ENCODE measurements at regions of chr7 and their contacts with region 1.

Region 1: DNA sequence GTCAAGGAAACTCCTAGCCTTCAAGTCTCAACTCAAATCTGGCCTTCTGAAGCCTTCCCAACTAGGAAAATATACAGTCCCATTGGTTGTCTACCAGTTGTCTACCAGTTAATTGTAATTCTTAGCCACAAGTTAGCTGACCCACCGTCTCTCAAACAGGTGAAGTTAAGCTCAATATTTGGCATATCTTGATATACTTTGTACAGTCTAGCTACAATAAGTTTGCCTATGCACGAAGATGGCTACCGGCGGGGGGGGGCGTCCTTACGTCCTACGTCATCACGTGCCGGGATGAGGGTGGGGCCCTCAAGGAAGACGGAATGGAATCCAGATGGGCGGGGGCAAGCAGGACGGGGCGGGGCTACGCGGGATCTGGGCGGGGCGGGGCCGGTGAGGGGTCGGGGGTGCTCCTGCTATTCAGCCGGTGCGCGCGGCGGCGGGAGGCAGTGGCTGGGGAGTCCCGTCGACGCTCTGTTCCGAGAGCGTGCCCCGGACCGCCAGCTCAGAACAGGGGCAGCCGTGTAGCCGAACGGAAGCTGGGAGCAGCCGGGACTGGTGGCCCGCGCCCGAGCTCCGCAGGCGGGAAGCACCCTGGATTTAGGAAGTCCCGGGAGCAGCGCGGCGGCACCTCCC is at the start of gene AHR:
- DNase-seq: peak; percentile 62
- ATAC-seq: peak; percentile 79
- H3K4me3 ChIP-seq: peak within 1 kb of the TSS; percentile 89
- H3K27ac ChIP-seq: peak within 1 kb of the TSS; percentile 61
- H3K4me1 ChIP-seq: peaks cover 6% of the 10 kb centered on the region; the same call in 1 of the 2 replicates
- H3K27me3 ChIP-seq: no peaks in the 10 kb centered on the region
- CTCF ChIP-seq: no peak
- EP300 ChIP-seq: no peak
- POLR2A ChIP-seq: peak; percentile 89
- RAD21 ChIP-seq: no peak
- polyA plus RNA-seq, gene AHR: 1.7 to 1.9 TPM

Region 2: DNA sequence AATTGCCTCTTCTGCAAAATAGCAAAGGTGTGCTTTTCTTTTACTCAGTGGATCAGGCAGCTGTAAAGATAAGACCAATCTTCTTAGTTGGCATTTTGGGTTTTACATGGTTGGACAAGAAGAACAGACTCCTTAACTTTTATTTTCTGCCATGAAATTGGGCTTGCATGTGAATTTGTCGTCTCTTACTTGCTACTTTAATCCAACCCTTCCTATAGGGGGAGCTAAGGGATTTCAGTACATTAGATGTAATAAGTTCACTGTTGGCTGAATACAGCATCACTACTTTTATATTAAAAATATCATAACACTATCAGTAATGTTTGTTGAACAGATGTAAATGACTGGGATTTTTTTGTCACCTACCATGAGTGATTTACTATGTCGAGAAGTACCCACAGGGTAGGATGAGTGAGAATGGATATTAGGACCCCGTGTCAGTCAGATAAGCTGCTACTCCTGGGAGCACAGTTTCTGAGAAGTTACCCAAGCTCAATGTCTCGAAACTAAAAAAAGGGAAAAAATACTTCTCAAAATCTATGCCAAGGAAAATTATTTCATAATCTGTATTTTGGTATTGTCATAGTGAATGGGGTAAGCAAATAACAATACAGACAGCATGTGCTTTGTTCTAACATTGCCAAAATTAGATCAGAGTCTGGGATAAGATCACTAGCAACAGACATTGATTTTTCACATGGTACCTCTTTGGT is 289.2 kb before region 1 on chr7:
- CTCF ChIA-PET with region 1: interaction called, 64 read pairs
- POLR2A ChIA-PET with region 1: no interaction called
- RAD21 ChIA-PET with region 1: interaction called, 59 read pairs
- SMC1A ChIA-PET with region 1: interaction called, 35 read pairs
- in situ Hi-C with region 1: no loop called
- intact Hi-C with region 1: loop called (anchors 1 kb)
- DNase-seq: no peak
- ATAC-seq: peak; percentile 72
- H3K4me3 ChIP-seq: no peak overlapping the region
- H3K27ac ChIP-seq: no peak overlapping the region
- H3K4me1 ChIP-seq: no peaks in the 10 kb centered on the region
- H3K27me3 ChIP-seq: no peaks in the 10 kb centered on the region
- CTCF ChIP-seq: peak; percentile 36 to 56 (median 38); a peak in 5 of 6 replicates
- EP300 ChIP-seq: no peak
- POLR2A ChIP-seq: no peak
- RAD21 ChIP-seq: peak; percentile 71

Region 3: DNA sequence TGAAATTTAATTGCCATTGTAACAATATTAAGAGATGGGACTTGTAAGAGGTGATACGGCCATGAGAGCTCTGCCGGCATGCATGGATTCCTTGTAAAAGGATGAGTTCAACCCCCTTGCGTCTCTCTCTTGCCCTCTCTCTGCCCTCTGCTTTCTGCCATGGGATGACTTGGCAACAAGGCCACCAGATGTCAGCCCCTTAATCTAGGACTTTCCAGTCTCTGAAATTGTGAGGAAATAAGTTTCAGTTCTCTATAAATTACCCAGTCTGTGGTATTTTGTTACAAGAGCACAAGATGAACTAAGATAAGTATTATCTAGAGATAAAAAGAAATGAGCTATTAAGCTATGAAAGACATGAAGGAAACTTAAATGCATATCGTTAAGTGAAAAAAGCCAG is 145.6 kb before region 1 on chr7:
- CTCF ChIA-PET with region 1: interaction called, 17 read pairs
- POLR2A ChIA-PET with region 1: no interaction called
- RAD21 ChIA-PET with region 1: interaction called, 20 read pairs
- SMC1A ChIA-PET with region 1: interaction called, 15 read pairs
- in situ Hi-C with region 1: no loop called
- intact Hi-C with region 1: no loop called
- DNase-seq: no peak
- ATAC-seq: peak; percentile 80
- H3K4me3 ChIP-seq: no peak overlapping the region
- H3K27ac ChIP-seq: no peak overlapping the region
- H3K4me1 ChIP-seq: peaks cover 29% of the 10 kb centered on the region
- H3K27me3 ChIP-seq: no peaks in the 10 kb centered on the region
- CTCF ChIP-seq: no peak
- EP300 ChIP-seq: peak; percentile 41 to 55; a peak in 2 of 4 replicates
- POLR2A ChIP-seq: no peak
- RAD21 ChIP-seq: peak; percentile 29; the same call in 1 of the 2 replicates

Region 4: DNA sequence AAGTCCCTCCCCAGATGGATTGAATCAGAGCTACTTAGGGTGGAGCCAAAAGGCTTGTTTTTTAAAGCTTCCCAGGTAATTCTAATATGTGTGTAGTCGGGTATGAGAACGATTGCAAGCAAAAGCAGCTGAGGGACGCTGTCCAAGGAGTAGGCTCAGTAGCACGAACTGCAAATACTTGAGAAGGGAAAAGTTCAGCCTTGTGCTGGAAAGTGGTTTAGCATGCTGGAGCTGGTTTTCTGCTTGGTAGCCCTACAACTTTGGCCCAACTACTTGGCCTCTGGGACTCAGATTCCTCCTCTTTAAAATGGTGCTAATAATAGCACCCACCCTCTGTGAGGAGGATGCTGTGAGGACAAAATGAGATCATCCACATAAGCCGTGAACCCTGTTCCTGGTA is 76.3 kb after region 1 on chr7:
- CTCF ChIA-PET with region 1: interaction called, 7 read pairs
- POLR2A ChIA-PET with region 1: no interaction called
- RAD21 ChIA-PET with region 1: interaction called, 5 read pairs
- SMC1A ChIA-PET with region 1: interaction called, 10 read pairs
- in situ Hi-C with region 1: no loop called
- intact Hi-C with region 1: no loop called
- DNase-seq: no peak
- ATAC-seq: peak; percentile 29
- H3K4me3 ChIP-seq: no peak overlapping the region
- H3K27ac ChIP-seq: no peak overlapping the region
- H3K4me1 ChIP-seq: no peaks in the 10 kb centered on the region
- H3K27me3 ChIP-seq: no peaks in the 10 kb centered on the region
- CTCF ChIP-seq: no peak
- EP300 ChIP-seq: no peak
- POLR2A ChIP-seq: no peak
- RAD21 ChIP-seq: no peak

Region 5: DNA sequence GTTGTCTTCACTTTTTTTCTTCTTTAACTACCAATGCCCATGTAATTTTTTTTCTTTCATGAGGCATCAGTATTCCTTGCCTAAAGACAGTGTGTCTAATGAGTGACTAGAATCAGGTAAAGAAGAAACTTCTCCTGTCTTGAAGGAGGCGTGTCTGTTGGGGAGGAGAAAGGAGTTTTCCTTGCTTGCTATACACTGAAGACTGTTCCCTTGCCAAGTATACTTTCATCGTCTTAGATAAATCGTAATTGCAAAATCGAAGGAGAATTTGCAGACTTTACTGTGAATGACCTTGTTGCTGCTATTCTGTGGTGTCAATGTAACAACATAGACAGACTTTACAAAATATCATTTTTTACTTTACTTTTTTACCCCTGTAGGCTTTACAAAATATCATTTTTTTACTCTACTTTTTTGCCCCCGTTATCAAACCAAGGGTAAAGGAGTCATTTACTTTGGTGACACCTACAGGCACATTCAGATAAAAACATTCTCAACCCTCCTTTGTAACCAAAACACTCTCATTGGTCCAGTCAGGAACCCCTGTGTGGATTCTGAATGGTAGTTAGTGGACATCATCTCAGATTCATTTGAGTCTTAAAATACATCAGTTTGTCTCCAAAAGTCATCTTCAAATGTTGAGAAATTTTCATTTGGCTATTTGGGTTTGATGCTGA is 232.6 kb after region 1 on chr7:
- CTCF ChIA-PET with region 1: interaction called, 56 read pairs
- POLR2A ChIA-PET with region 1: interaction called, 3 read pairs
- RAD21 ChIA-PET with region 1: interaction called, 34 read pairs
- SMC1A ChIA-PET with region 1: interaction called, 24 read pairs
- in situ Hi-C with region 1: no loop called
- intact Hi-C with region 1: loop called (anchors 1 kb)
- DNase-seq: peak; percentile 19
- ATAC-seq: peak; percentile 93
- H3K4me3 ChIP-seq: no peak overlapping the region
- H3K27ac ChIP-seq: no peak overlapping the region
- H3K4me1 ChIP-seq: no peaks in the 10 kb centered on the region
- H3K27me3 ChIP-seq: no peaks in the 10 kb centered on the region; a peak in 1 of 4 replicates
- CTCF ChIP-seq: peak; percentile 14 to 57 (median 29); a peak in 3 of 6 replicates
- EP300 ChIP-seq: no peak
- POLR2A ChIP-seq: no peak
- RAD21 ChIP-seq: peak; percentile 79

Region 6: GRCh38 chr7:17769918-17770317 is 471.6 kb after region 1 on chr7:
- CTCF ChIA-PET with region 1: interaction called, 10 read pairs
- POLR2A ChIA-PET with region 1: no interaction called
- RAD21 ChIA-PET with region 1: interaction called, 9 read pairs
- SMC1A ChIA-PET with region 1: interaction called, 8 read pairs
- in situ Hi-C with region 1: no loop called
- intact Hi-C with region 1: no loop called
- DNase-seq: no peak
- ATAC-seq: peak; percentile 85
- H3K4me3 ChIP-seq: no peak overlapping the region
- H3K27ac ChIP-seq: no peak overlapping the region
- H3K4me1 ChIP-seq: 0 out of 2 replicates have a peak, but pooled peaks cover 3% of the 10 kb centered on the region
- H3K27me3 ChIP-seq: no peaks in the 10 kb centered on the region
- CTCF ChIP-seq: peak; percentile 73 to 86 (median 74)
- EP300 ChIP-seq: no peak
- POLR2A ChIP-seq: no peak
- RAD21 ChIP-seq: peak; percentile 99